ENCODE measurements at regions of chr7 and their contacts with region 1.

Region 1: DNA sequence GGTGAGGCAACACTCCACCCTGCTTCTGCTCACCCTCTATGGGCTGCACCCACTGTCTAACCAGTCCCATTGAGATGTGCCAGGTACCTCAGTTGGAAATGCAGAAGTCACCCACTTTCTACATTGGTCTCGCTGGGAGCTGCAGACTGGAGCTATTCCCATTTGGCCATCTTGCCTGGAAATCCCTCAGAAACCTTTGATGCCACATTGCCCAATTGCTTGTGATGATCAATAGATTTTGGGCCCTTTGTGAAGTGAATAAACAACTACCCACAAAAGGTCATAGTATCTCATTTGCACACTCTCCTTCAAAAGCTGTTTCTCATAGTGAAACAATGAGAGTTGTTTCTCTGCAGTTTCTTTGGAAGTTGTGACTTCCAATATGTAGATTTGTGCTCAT is 742.9 kb downstream of the INHBA start:
- DNase-seq: no peak
- ATAC-seq: no peak
- H3K4me3 ChIP-seq: no peak overlapping the region
- H3K27ac ChIP-seq: no peak overlapping the region
- H3K4me1 ChIP-seq: no peaks in the 10 kb centered on the region
- H3K27me3 ChIP-seq: no peaks in the 10 kb centered on the region
- CTCF ChIP-seq: no peak

Region 2: DNA sequence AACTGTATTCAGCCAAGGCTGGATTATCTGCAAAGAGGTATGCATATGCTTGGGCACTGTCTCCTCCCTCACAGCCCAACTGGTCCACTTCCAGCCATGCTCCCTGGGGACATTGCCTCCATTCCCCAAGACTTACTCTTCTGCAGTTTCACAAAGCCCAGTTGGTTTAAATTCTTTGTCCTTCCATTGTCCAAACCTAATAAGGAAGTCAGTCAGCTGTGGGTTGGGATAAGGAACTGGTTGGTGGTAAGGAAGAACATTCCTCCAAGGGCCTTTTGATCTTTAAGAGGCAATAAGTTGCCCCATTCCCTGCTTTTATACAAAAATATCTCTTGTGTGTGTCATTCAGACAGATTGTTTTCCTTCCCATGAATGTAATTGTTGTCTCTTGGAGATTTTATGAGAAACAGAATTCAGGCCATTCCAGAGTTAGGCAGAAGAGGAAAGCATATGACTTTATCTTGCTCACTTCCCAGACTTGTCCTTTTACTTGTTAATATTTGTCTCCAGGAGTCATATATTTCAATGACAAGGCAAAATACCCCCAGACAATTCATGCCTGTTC is 151.5 kb before region 1 on chr7:
- CTCF ChIA-PET with region 1: no interaction called
- POLR2A ChIA-PET with region 1: no interaction called
- in situ Hi-C with region 1: no loop called
- intact Hi-C with region 1: no loop called
- DNase-seq: no peak
- ATAC-seq: no peak
- H3K4me3 ChIP-seq: no peak overlapping the region
- H3K27ac ChIP-seq: no peak overlapping the region
- H3K4me1 ChIP-seq: no peaks in the 10 kb centered on the region
- H3K27me3 ChIP-seq: no peaks in the 10 kb centered on the region
- CTCF ChIP-seq: no peak

Region 3: DNA sequence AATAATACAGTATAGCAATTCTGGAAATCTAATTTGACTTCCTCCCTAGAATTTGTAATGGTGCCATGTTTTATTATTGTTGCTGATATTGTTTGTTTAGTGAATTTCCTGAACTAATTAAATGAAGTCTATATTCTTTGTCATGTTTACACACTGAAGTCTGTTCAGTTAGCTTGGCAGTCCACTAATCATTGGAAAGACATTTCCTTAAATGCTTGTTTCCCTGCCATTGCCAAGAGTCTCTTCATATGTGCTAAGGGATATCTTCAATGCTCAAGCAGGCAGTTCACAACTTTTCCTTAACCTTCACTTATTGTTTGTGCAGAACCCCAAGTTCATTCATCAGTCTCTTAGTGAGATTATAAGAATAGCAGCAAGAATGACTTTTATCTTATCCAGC is 12.4 kb before region 1 on chr7:
- CTCF ChIA-PET with region 1: no interaction called
- POLR2A ChIA-PET with region 1: no interaction called
- in situ Hi-C with region 1: no loop called
- intact Hi-C with region 1: loop called (anchors 1 kb)
- DNase-seq: no peak
- ATAC-seq: no peak
- H3K4me3 ChIP-seq: no peak overlapping the region
- H3K27ac ChIP-seq: no peak overlapping the region
- H3K4me1 ChIP-seq: no peaks in the 10 kb centered on the region
- H3K27me3 ChIP-seq: no peaks in the 10 kb centered on the region
- CTCF ChIP-seq: no peak

Region 4: GRCh38 chr7:41148521-41148951 is 188.6 kb after region 1 on chr7:
- CTCF ChIA-PET with region 1: no interaction called
- POLR2A ChIA-PET with region 1: interaction called, 10 read pairs
- in situ Hi-C with region 1: no loop called
- intact Hi-C with region 1: no loop called
- DNase-seq: peak; percentile 54
- ATAC-seq: peak; percentile 92
- H3K4me3 ChIP-seq: no peak overlapping the region
- H3K27ac ChIP-seq: no peak overlapping the region
- H3K4me1 ChIP-seq: no peaks in the 10 kb centered on the region
- H3K27me3 ChIP-seq: no peaks in the 10 kb centered on the region
- CTCF ChIP-seq: no peak